Endothelial cell of umbilical vein (primary cell): ENCODE measurements at regions of chr16 and their contacts with region 1.

Region 1: DNA sequence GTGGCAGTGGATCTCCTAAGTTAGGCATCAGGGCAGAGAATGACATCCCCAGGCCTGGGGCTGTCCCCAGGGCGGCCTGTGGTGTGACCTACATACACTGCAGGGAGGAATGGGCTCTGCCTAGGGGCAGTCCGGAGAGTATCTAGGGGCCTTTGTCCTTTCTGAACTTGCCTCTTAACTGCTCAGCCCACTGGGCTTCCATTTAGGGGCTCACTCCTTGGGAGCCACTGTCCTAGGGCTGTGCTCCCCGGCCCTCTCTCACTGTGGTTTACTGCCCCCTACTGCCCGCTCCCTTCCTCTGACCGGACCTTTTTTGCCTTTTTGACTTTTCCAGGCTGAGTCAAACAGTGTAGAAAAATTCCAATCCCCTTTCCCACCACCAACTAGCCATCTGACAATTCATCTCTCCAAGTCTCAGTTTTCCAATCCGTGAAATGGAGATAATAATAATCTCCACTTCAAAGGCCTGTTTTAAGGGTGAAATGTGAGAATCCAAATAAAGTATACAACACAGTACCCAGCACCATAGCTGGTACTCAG is 66.8 kb downstream of the DNAH3 start:
- DNase-seq: peak; percentile 66
- H3K4me3 ChIP-seq: no peak overlapping the region
- H3K27ac ChIP-seq: no peak overlapping the region
- H3K4me1 ChIP-seq: no peaks in the 10 kb centered on the region
- H3K27me3 ChIP-seq: peaks cover 0 to 2% of the 10 kb centered on the region in 2 experiments
- CTCF ChIP-seq: peak; percentile 71 to 83
- POLR2A ChIP-seq: no peak

Region 2: GRCh38 chr16:20774703-20775362 is 309.0 kb before region 1 on chr16:
- CTCF ChIA-PET with region 1: interaction called, 26 read pairs
- POLR2A ChIA-PET with region 1: no interaction called
- dilution Hi-C with region 1: no loop called
- intact Hi-C with region 1: loop called (anchors 1 kb)
- DNase-seq: peak; percentile 70
- H3K4me3 ChIP-seq: no peak overlapping the region
- H3K27ac ChIP-seq: no peak overlapping the region
- H3K4me1 ChIP-seq: no peaks in the 10 kb centered on the region
- H3K27me3 ChIP-seq: peaks cover 0 to 1% of the 10 kb centered on the region in 2 experiments
- CTCF ChIP-seq: peak; percentile 85 to 94
- POLR2A ChIP-seq: no peak

Region 3: DNA sequence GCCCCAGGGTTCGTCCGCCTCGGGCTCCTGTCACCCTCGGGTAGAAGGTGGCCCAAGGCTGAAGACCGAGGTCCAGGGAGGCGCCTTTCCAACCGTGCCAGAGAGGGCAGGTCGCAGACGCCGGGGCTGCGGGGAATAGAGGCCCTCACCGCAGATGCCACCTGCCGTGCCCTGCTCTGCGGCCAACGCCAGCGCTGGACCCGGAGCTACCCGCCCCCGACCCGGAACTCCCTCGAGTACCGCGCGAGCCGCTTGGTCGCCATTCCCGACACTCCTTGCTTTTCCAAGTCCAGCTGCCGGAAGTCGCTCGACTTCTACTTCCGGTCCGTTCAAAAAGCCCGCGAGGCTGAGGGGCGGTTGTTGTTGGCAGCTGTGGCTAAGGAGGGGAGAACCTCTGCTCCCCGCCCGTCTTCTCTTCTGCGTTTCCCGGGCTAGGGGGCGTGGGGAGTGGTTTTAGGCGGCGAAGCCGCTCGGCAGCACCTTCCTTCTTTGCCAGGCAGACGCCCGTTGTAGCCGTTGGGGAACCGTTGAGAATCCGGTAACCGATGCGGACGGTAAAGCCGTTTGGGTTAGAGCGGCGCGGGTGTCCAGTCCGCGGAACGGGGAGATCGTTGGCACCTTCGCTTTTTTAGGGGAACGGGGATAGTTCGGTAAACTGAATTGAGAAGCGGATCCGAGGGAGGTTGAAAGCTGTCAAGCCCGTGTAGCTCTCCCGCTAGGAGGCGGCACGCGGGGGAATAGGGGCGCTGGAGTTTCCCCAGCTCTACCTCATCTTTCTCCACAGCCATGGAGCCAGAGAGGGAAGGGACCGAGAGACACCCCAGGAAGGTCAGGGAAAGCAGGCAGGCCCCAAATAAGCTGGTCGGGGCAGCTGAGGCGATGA is 277.4 kb before region 1 on chr16 and contains the starts of genes ERI2 and REXO5:
- CTCF ChIA-PET with region 1: interaction called, 4 read pairs
- POLR2A ChIA-PET with region 1: no interaction called
- dilution Hi-C with region 1: no loop called
- intact Hi-C with region 1: loop called (anchors 1 kb)
- DNase-seq: peak; percentile 94
- H3K4me3 ChIP-seq: peak within 1 kb of the TSS; percentile 44 to 68 (median 50)
- H3K27ac ChIP-seq: peak within 1 kb of the TSS; percentile 49
- H3K4me1 ChIP-seq: peaks cover 8% of the 10 kb centered on the region
- H3K27me3 ChIP-seq: no peaks in the 10 kb centered on the region
- CTCF ChIP-seq: peak; percentile 36 to 66
- POLR2A ChIP-seq: peak; percentile 76
- total RNA-seq, gene ERI2: 8.9 and 9.3 TPM in 2 replicates
- total RNA-seq, gene REXO5: 7.4 and 11.5 TPM in 2 replicates

Region 4: DNA sequence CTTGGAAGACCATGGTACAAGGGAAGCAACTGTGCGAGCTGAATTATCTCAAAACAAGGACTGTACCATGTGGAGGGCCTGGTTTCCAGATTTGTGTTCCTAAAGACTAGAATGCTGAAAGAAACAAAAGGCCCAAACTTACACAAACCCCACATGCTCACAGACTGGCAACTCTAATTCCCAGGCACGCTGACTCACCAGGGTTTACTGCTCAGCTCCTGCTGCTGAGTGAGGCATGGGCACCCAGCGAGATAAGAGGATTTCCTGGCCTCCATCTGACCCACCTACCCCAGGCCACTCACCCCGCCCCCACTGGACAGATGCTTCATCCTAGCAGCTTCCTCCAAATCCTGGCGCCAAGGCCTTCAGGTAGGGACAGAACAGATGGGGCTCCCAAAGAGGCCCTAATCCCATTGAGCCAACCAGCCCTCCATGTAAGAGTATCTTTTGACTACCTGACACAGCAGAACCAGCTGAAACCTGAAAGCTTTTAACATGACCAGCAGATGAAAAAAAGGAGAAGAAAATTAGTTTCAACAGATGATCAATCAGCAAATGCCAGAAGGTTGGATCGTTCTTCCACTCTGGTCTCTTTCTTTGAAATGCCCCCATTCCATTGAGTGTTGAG is 217.5 kb before region 1 on chr16:
- CTCF ChIA-PET with region 1: no interaction called
- POLR2A ChIA-PET with region 1: no interaction called
- dilution Hi-C with region 1: no loop called
- intact Hi-C with region 1: loop called (anchors 5 kb)
- DNase-seq: peak; percentile 90
- H3K4me3 ChIP-seq: no peak overlapping the region
- H3K27ac ChIP-seq: peak overlapping the region; percentile 97
- H3K4me1 ChIP-seq: peaks cover 55% of the 10 kb centered on the region
- H3K27me3 ChIP-seq: no peaks in the 10 kb centered on the region
- CTCF ChIP-seq: no peak
- POLR2A ChIP-seq: peak; percentile 42